ENCODE measurements at regions of chr2 and their contacts with region 1.

Region 1: DNA sequence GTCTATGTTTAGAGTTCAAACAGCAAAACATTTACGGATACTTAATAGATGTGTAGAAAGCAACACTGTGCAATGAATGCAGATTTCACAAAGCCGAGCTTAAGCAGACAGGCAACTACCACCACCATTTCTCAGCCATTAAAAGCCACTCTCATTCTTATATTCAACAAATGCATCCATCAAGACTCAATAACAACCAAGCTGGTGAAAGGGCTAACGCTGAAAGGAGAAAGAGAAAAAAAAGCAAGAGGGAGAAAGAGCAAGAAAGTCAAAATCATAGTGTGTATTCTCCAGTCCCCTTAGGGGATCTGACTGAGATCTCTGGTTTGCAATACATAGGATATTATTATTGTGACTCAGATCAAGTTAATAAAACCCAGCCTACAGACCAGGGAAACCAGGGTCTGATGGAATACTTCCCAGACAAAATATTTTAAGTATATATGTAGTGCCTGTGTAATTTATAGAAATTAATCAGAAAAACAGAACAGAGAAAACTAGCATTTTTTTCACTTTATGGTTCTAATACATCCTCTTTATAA is 14.1 kb downstream of the SATB2 start:
- DNase-seq: no peak
- H3K4me3 ChIP-seq: no peak overlapping the region
- H3K27me3 ChIP-seq: no peaks in the 10 kb centered on the region
- CTCF ChIP-seq: no peak

Region 2: GRCh38 chr2:199414465-199414864 is 29.2 kb before region 1 on chr2:
- CTCF ChIA-PET with region 1: interaction called, 3 read pairs
- POLR2A ChIA-PET with region 1: interaction called, 14 read pairs
- DNase-seq: no peak
- H3K4me3 ChIP-seq: no peak overlapping the region
- H3K27me3 ChIP-seq: no peaks in the 10 kb centered on the region
- CTCF ChIP-seq: no peak

Region 3: DNA sequence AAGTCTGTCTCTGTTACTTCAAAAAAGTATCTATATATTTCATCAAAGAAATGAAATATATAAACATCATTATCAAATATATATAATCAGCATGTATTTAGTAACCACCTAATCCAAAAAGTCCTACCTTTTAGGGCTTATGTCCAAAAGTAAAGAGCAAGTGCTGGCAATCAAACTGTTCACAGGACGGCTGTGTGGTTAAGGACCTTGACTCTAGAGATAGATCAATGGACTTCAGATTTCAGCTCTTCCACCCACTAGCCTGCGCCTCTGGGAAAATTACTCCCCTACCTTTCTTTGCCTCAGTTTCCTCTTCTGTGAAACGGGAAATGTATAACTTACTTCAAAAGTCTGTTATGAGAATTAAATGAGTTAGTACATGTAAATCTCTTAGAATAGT is 15.4 kb before region 1 on chr2:
- CTCF ChIA-PET with region 1: no interaction called
- POLR2A ChIA-PET with region 1: no interaction called
- DNase-seq: no peak
- H3K4me3 ChIP-seq: no peak overlapping the region
- H3K27me3 ChIP-seq: no peaks in the 10 kb centered on the region
- CTCF ChIP-seq: no peak

Region 4: GRCh38 chr2:199495149-199495548 is 51.5 kb after region 1 on chr2:
- CTCF ChIA-PET with region 1: no interaction called
- POLR2A ChIA-PET with region 1: no interaction called
- DNase-seq: no peak
- H3K4me3 ChIP-seq: no peak overlapping the region
- H3K27me3 ChIP-seq: no peaks in the 10 kb centered on the region
- CTCF ChIP-seq: no peak